B cell (primary cell): ENCODE measurements at regions of chr18 and their contacts with region 1.

Region 1: DNA sequence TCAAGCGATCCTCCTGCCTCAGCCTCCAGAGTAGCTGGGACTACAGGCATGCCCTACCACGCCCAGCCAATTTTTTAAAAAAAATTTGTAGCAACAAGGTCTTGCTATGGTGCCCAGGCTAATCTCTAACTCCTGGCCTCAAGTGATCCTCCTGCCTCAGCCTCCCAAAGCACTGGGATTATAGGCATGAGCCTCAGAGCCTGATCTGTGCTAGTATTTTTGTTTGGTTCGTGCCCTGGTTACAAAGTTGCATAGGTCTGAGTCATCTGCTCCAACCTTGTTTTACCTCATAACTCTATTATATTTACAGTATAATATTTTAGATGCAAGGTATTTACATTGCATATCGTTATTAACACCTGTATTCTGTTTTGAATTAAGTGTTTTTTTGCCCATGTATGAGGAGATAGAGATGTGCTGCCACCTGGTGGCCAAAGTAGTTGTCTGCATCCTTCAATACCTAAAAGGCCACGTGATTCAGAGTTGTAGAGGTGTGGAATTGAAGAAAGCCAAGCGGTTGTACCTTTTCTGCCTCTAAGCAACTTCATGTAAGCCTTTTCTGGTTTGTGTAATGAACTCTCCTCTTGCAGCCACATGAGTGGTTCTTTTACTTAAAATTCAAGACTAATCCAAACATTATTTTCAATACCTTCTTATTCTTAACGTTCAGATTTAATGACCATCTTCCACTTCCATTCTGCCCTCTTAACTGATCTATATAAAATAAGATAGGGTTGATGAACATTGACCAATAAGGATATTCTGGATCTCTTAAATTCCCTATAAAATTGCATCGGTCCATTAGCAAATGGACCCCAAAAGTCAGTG is 19.9 kb upstream of the CABYR start:
- DNase-seq: peak; percentile 84
- ATAC-seq: peak; percentile 88
- H3K4me3 ChIP-seq: no peak overlapping the region
- H3K4me3 Mint-ChIP-seq: no peak overlapping the region
- H3K27ac ChIP-seq: no peak overlapping the region
- H3K27ac Mint-ChIP-seq: no peak overlapping the region
- H3K4me1 ChIP-seq: peaks cover 0 to 7% of the 10 kb centered on the region in 2 donors
- H3K4me1 Mint-ChIP-seq: peaks cover 9% of the 10 kb centered on the region
- H3K27me3 ChIP-seq: no peaks in the 10 kb centered on the region
- H3K27me3 Mint-ChIP-seq: no peaks in the 10 kb centered on the region
- CTCF ChIP-seq: peak; percentile 98

Region 2: DNA sequence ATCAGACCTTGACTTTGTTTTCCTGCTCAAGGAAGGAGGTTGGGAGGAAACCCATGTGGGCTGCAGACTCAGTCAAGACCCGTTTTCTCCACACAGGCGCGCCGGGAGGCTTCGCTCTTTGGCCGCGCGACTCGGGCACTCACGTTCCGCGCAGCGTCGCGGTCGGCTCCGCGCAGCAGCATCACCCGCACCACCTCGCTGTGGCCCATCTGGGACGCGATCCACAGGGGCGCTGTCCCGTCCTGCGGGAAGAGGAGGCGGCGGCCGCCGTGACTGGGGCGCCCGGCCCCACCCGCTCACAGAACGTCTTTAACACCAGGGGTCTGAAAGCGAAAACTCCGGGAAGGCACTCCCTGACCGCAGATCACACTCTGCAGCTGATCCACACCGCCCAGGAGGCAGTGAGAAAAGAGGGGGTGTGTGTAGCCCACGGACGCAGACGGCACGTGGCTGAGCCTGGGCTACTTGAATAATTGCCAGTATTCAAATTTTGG is 499.5 kb before region 1 on chr18:
- CTCF ChIA-PET with region 1: interaction called, 15 read pairs
- POLR2A ChIA-PET with region 1: no interaction called
- intact Hi-C with region 1: loop called (anchors 1 kb)
- DNase-seq: peak; percentile 34
- ATAC-seq: peak; percentile 33
- H3K4me3 ChIP-seq: peak overlapping the region; percentile 4 to 52 (median 38)
- H3K4me3 Mint-ChIP-seq: peak overlapping the region; percentile 77
- H3K27ac ChIP-seq: no peak overlapping the region
- H3K27ac Mint-ChIP-seq: no peak overlapping the region
- H3K4me1 ChIP-seq: peaks cover 12 to 15% of the 10 kb centered on the region in 2 donors
- H3K4me1 Mint-ChIP-seq: peaks cover 18% of the 10 kb centered on the region
- H3K27me3 ChIP-seq: peaks cover 0 to 34% (median 25%) of the 10 kb centered on the region in 4 experiments
- H3K27me3 Mint-ChIP-seq: peaks cover 48% of the 10 kb centered on the region
- CTCF ChIP-seq: no peak

Region 3: GRCh38 chr18:23918401-23919032 is 200.4 kb before region 1 on chr18:
- CTCF ChIA-PET with region 1: interaction called, 7 read pairs
- POLR2A ChIA-PET with region 1: no interaction called
- intact Hi-C with region 1: loop called (anchors 1 kb)
- DNase-seq: peak; percentile 79
- ATAC-seq: peak; percentile 70
- H3K4me3 ChIP-seq: no peak overlapping the region
- H3K4me3 Mint-ChIP-seq: no peak overlapping the region
- H3K27ac ChIP-seq: no peak overlapping the region
- H3K27ac Mint-ChIP-seq: no peak overlapping the region
- H3K4me1 ChIP-seq: peaks cover 0 to 6% of the 10 kb centered on the region in 2 donors
- H3K4me1 Mint-ChIP-seq: no peaks in the 10 kb centered on the region
- H3K27me3 ChIP-seq: no peaks in the 10 kb centered on the region
- H3K27me3 Mint-ChIP-seq: peaks cover 15% of the 10 kb centered on the region
- CTCF ChIP-seq: peak; percentile 97

Region 4: GRCh38 chr18:24014062-24014985 is 104.6 kb before region 1 on chr18 and contains the start of gene TTC39C:
- CTCF ChIA-PET with region 1: interaction called, 3 read pairs
- POLR2A ChIA-PET with region 1: no interaction called
- intact Hi-C with region 1: loop called (anchors 2 kb)
- DNase-seq: peak; percentile 81
- ATAC-seq: peak; percentile 63
- H3K4me3 ChIP-seq: peak within 1 kb of the TSS; percentile 77 to 85 (median 78)
- H3K4me3 Mint-ChIP-seq: peak within 1 kb of the TSS; percentile 91
- H3K27ac ChIP-seq: peak within 1 kb of the TSS; percentile 78 to 80
- H3K27ac Mint-ChIP-seq: peak within 1 kb of the TSS; percentile 85
- H3K4me1 ChIP-seq: peaks cover 72 to 85% of the 10 kb centered on the region in 2 donors
- H3K4me1 Mint-ChIP-seq: peaks cover 76% of the 10 kb centered on the region
- H3K27me3 ChIP-seq: no peaks in the 10 kb centered on the region
- H3K27me3 Mint-ChIP-seq: no peaks in the 10 kb centered on the region
- CTCF ChIP-seq: no peak
- total RNA-seq, gene TTC39C: 44.3 and 52.9 TPM in 2 replicates

Region 5: GRCh38 chr18:24212939-24213338 is 94.0 kb after region 1 on chr18:
- CTCF ChIA-PET with region 1: no interaction called
- POLR2A ChIA-PET with region 1: no interaction called
- intact Hi-C with region 1: no loop called
- DNase-seq: no peak
- ATAC-seq: no peak
- H3K4me3 ChIP-seq: no peak overlapping the region
- H3K4me3 Mint-ChIP-seq: no peak overlapping the region
- H3K27ac ChIP-seq: no peak overlapping the region
- H3K27ac Mint-ChIP-seq: no peak overlapping the region
- H3K4me1 ChIP-seq: no peaks in the 10 kb centered on the region
- H3K4me1 Mint-ChIP-seq: no peaks in the 10 kb centered on the region
- H3K27me3 ChIP-seq: no peaks in the 10 kb centered on the region
- H3K27me3 Mint-ChIP-seq: peaks cover 3% of the 10 kb centered on the region
- CTCF ChIP-seq: no peak